Right ventricle myocardium superior (tissue), 1 donor: ENCODE measurements at regions of chr16 and their contacts with region 1.

Region 1: DNA sequence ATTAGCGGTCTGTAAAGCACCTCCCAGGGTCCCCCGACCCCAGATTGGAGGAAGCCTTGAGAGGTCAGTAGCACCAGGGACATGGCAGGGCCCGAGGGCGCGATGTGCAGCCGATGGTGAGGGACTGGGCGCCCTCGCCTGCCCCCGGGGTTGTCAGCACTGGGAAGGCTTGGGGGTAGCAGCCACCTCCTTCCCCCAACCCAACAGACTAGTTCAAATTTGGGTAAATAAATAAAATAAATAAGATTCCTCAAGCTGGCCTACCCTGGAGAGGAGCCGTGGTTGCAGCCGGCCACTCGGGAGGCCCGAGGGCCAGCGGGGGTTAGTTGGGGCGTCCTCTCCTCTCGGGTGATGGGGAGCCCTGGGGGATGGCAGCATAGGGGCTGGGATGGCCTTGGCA is 1.5 kb downstream of the C16orf92 start:
- DNase-seq: no peak
- ATAC-seq: no peak

Region 2: GRCh38 chr16:29694384-29695195 is 329.9 kb before region 1 on chr16:
- intact Hi-C with region 1: loop called (anchors 5 kb)
- DNase-seq: no peak
- ATAC-seq: no peak

Region 3: DNA sequence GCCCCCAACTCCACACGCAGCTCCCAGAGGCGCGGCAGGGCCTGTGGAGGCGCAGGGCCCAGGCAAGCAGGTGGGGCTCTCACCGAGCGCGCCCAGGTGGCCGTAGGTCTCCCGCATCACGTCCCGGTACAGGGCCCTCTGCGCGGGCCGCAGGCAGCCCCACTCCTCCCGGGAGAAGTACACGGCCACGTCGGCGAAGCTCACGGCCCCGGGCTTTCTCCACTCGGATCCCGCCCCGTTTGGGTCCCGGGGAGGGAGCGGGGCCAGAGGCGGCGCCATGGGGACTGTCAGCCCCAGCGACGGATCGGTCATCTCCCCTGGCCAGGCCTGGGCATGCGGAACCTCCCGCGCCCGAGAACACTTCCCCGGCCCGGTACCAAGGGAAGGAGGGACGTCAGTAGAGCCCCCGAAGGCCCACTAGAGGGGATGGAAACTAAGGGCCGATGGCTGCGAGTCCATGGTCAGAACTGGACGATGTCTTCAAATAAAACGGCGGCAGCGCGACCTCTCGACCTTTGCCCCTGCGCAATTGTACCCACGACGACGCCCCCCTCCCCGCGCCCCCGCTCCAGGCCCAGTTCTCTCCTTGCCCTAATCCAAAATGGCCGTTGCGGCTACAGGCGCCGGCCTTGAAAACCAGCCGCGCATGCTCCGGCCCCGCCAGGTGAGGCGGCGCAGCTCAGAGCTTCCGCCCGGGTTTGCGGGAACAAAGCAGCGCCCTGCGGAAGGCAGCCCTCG is 510.1 kb after region 1 on chr16 and contains the start of gene ZNF747:
- intact Hi-C with region 1: no loop called
- DNase-seq: peak; percentile 96
- ATAC-seq: peak; percentile 90
- total RNA-seq, gene ZNF747: 8.0 TPM